Heart right ventricle (tissue), 16 donors: ENCODE measurements at regions of chr4 and their contacts with region 1.

Region 1: DNA sequence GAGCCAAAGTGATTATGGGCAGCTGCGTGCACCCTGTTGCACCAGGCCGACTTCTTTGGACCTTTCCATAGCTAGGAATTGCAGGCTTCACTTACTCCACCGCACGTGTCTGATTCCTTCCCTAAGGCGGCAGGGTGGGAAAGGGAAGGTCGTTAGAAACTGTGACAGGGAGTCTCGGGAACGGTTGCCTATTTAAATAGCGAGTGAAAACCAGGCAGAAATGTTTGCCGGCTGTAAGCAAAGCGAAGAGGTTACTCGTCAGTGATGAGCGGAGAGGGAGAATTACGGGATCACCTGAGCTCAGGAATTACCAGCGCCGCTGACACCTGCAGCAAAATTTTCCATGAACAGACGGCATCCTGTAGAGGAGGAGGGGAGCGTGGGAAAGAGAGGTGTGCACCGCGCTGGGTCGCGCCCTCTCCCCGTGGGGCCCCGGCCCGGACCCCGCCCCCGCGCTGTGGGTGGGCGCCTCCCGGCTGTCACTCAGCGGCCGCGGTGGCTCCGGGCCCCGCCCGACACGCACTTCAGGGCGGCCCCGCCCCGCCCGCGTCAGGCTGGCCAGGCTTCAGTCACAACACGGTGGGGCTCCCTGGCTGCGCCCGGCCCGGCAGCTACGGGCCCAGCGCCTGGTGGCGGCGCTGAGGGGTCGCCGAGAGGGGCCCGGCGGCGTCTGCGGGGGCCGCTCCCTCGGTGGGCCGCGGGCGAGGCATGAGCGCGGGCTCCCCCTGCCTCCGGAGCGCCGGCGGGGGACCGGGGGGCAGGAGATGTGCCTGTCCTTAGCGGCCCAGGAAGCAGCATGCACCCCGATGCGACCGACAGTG is at the start of gene SNX25:
- DNase-seq: peak; percentile 85 to 90
- ATAC-seq: peak; percentile 94 to 98 (median 96)
- H3K4me3 ChIP-seq: peak within 1 kb of the TSS; percentile 54 to 94 (median 70)
- H3K27ac ChIP-seq: peak within 1 kb of the TSS; percentile 65 to 91 (median 87)
- H3K4me1 ChIP-seq: peaks cover 6 to 35% (median 27%) of the 10 kb centered on the region in 9 donors
- H3K27me3 ChIP-seq: peaks cover 0 to 43% (median 0%) of the 10 kb centered on the region in 7 donors
- CTCF ChIP-seq: peak in 4 of 9 donors; percentile 32 to 57 (median 41)
- total RNA-seq, gene SNX25: 7.4 to 12.6 (median 9.8) TPM

Region 2: DNA sequence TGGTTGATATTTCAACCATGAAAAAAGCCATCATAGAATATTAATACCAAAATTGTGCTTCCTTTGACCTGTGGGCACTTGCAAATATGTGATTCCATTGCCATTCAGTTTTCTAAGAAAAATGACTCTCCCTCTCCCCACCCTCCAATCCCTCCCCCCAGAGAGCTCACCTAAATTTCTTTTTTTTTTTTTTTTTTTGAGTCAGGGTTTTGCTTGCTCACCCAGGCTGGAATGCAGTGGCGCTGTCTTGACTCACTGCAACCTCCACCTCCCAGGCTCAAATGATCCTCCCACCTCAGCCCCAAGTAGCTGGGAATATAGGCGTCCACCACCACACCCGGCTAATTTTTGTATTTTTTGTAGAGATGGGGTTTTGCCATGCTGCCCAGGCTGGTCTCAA is 47.2 kb after region 1 on chr4:
- intact Hi-C with region 1: loop called in 1 of 10 experiments (anchors 5 kb)
- DNase-seq: no peak
- ATAC-seq: no peak
- H3K4me3 ChIP-seq: no peak overlapping the region
- H3K27ac ChIP-seq: no peak overlapping the region
- H3K4me1 ChIP-seq: peaks cover 0 to 31% (median 19%) of the 10 kb centered on the region in 9 donors
- H3K27me3 ChIP-seq: no peaks in the 10 kb centered on the region
- CTCF ChIP-seq: no peak

Region 3: GRCh38 chr4:185304944-185305690 is 95.9 kb after region 1 on chr4:
- intact Hi-C with region 1: loop called in 2 of 10 experiments (anchors 10 kb)
- DNase-seq: peak in 1 of 2 donors; percentile 13
- ATAC-seq: peak in 7 of 8 donors; percentile 44 to 71 (median 65)
- H3K4me3 ChIP-seq: no peak overlapping the region
- H3K27ac ChIP-seq: no peak overlapping the region
- H3K4me1 ChIP-seq: peaks cover 0 to 8% (median 0%) of the 10 kb centered on the region in 9 donors
- H3K27me3 ChIP-seq: no peaks in the 10 kb centered on the region
- CTCF ChIP-seq: peak in 8 of 9 donors; percentile 8 to 65 (median 50)